PC-3 (cell line): ENCODE measurements at regions of chr20 and their contacts with region 1.

Region 1: GRCh38 chr20:35263532-35264223 is 14.2 kb downstream of the MMP24OS start:
- DNase-seq: peak; percentile 49
- ATAC-seq: peak; percentile 61
- H3K4me3 ChIP-seq: peak overlapping the region; percentile 26; the same call in 1 of the 2 replicates
- H3K27ac ChIP-seq: peak overlapping the region; percentile 32
- H3K4me1 ChIP-seq: peaks cover 19% of the 10 kb centered on the region
- H3K27me3 ChIP-seq: no peaks in the 10 kb centered on the region
- CTCF ChIP-seq: no peak

Region 2: GRCh38 chr20:35192111-35192872 is 71.4 kb before region 1 on chr20:
- CTCF ChIA-PET with region 1: no interaction called
- POLR2A ChIA-PET with region 1: interaction called, 25 read pairs
- intact Hi-C with region 1: no loop called
- DNase-seq: peak; percentile 88
- ATAC-seq: peak; percentile 94
- H3K4me3 ChIP-seq: no peak overlapping the region
- H3K27ac ChIP-seq: 0 out of 2 replicates have a peak overlapping the region, but pooled peaks have one; percentile 18
- H3K4me1 ChIP-seq: peaks cover 27% of the 10 kb centered on the region
- H3K27me3 ChIP-seq: no peaks in the 10 kb centered on the region
- CTCF ChIP-seq: no peak

Region 3: GRCh38 chr20:35215066-35215956 is 48.4 kb before region 1 on chr20:
- CTCF ChIA-PET with region 1: no interaction called
- POLR2A ChIA-PET with region 1: no interaction called
- intact Hi-C with region 1: loop called (anchors 2 kb)
- DNase-seq: peak; percentile 89
- ATAC-seq: peak; percentile 84
- H3K4me3 ChIP-seq: no peak overlapping the region
- H3K27ac ChIP-seq: peak overlapping the region; percentile 39
- H3K4me1 ChIP-seq: peaks cover 18% of the 10 kb centered on the region
- H3K27me3 ChIP-seq: no peaks in the 10 kb centered on the region
- CTCF ChIP-seq: no peak

Region 4: DNA sequence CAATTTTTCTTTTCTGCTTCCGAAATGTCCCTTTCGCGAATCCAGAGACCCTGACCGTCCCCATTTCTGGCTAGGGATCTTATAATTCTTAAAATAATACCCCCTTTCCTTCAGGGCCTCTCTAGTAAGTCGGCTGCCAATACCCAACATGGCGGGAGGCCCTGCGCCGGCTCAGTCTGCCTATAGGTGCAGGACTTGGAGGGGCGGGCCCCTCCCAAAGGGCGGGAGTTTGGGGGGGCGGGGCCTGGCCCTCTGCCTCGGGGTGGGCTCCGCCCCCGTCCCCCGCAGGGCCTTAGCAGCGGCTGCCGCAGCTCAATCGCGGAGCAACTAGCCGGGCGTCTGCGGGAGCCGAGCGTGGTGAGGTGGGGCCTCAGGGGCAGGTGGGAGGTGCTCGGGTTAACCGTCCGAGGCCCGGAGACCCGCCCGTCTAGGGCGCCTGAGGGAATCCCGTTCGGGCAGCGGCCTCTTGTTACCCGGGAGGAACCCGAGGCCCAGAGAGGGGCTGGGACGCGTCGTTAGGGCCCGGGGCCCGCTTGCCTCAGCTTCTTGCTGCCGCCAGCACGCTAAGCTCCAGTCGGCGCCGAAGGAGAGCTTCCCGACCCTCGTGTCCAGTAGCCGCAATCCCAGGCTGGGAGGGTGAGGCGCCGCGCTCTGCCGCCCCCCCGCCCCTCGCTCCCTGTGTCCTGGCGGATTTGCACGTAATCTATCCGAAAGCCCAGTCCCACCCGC is 191.4 kb after region 1 on chr20 and contains the start of gene CEP250:
- CTCF ChIA-PET with region 1: no interaction called
- POLR2A ChIA-PET with region 1: interaction called, 15 read pairs
- intact Hi-C with region 1: no loop called
- DNase-seq: peak; percentile 98
- ATAC-seq: peak; percentile 84
- H3K4me3 ChIP-seq: peak within 1 kb of the TSS; percentile 70
- H3K27ac ChIP-seq: peak within 1 kb of the TSS; percentile 90
- H3K4me1 ChIP-seq: peaks cover 19% of the 10 kb centered on the region
- H3K27me3 ChIP-seq: no peaks in the 10 kb centered on the region
- CTCF ChIP-seq: no peak
- total RNA-seq, gene CEP250: 52.5 and 75.0 TPM in 2 replicates